GM10248 (cell line): ENCODE measurements at regions of chr2 and their contacts with region 1.

Region 1: GRCh38 chr2:7203055-7203467 is 285.8 kb downstream of the RNF144A start:
- DNase-seq: peak; percentile 45
- CTCF ChIP-seq: peak; percentile 80

Region 2: GRCh38 chr2:7191932-7192331 is 11.1 kb before region 1 on chr2:
- CTCF ChIA-PET with region 1: interaction called, 11 read pairs
- POLR2A ChIA-PET with region 1: no interaction called
- DNase-seq: no peak
- CTCF ChIP-seq: no peak

Region 3: DNA sequence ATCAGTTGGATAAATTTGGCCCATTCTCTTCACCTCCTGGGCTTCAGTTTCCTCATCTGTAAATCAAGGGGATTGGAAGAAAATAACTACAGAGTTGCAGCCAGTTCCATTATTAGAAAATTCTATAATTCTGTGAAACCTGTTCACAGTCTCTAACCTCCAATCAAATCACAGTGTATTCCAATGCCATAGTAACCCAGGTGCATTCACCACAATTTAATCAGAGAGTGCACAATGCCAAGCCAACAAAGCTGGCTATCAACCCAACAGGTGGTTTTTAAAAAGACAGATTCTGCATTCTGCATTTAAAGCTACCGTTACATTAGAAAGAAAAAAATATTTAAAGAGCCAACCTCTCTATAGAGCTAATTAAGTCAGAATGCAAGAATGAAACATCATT is 22.8 kb after region 1 on chr2:
- CTCF ChIA-PET with region 1: interaction called, 12 read pairs
- POLR2A ChIA-PET with region 1: no interaction called
- DNase-seq: no peak
- CTCF ChIP-seq: no peak

Region 4: GRCh38 chr2:7539760-7540159 is 336.7 kb after region 1 on chr2:
- CTCF ChIA-PET with region 1: no interaction called
- POLR2A ChIA-PET with region 1: no interaction called
- DNase-seq: no peak
- CTCF ChIP-seq: no peak